ENCODE measurements at regions of chr7 and their contacts with region 1.

Region 1: DNA sequence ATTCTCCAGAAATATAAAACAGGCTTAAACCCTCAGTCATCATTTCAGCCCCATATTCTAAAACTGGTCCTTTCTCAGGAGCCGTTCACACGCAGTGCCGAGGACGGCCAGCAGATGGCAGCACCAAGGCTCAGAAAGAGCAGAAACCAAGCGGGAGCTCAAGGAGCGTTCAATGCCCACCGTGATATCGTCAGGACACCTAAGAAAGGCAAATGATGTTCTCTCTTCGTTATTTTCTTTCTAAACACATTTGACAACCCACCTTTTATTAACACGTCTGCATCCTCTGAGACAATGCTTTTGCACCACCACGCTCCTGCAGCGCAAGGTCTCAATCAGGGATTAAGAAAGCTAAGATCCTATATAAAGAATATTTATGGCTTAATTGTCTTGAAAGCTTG is 45.7 kb upstream of the RBM33 start:
- DNase-seq: peak; percentile 58 to 89 (median 80)
- H3K4me3 ChIP-seq: no peak overlapping the region
- H3K27ac ChIP-seq: no peak overlapping the region
- H3K4me1 ChIP-seq: no peaks in the 10 kb centered on the region
- H3K27me3 ChIP-seq: no peaks in the 10 kb centered on the region
- CTCF ChIP-seq: peak; percentile 74 to 82 (median 80)
- EP300 ChIP-seq: no peak
- POLR2A ChIP-seq: no peak

Region 2: GRCh38 chr7:155738652-155739537 is 140.1 kb after region 1 on chr7:
- intact Hi-C with region 1: loop called in 3 of 4 experiments (anchors 5 to 10 kb)
- DNase-seq: peak; percentile 47 to 79 (median 67)
- H3K4me3 ChIP-seq: no peak overlapping the region
- H3K27ac ChIP-seq: no peak overlapping the region
- H3K4me1 ChIP-seq: no peaks in the 10 kb centered on the region
- H3K27me3 ChIP-seq: no peaks in the 10 kb centered on the region
- CTCF ChIP-seq: peak in 1 of 3 donors; percentile 31
- EP300 ChIP-seq: no peak
- POLR2A ChIP-seq: no peak

Region 3: DNA sequence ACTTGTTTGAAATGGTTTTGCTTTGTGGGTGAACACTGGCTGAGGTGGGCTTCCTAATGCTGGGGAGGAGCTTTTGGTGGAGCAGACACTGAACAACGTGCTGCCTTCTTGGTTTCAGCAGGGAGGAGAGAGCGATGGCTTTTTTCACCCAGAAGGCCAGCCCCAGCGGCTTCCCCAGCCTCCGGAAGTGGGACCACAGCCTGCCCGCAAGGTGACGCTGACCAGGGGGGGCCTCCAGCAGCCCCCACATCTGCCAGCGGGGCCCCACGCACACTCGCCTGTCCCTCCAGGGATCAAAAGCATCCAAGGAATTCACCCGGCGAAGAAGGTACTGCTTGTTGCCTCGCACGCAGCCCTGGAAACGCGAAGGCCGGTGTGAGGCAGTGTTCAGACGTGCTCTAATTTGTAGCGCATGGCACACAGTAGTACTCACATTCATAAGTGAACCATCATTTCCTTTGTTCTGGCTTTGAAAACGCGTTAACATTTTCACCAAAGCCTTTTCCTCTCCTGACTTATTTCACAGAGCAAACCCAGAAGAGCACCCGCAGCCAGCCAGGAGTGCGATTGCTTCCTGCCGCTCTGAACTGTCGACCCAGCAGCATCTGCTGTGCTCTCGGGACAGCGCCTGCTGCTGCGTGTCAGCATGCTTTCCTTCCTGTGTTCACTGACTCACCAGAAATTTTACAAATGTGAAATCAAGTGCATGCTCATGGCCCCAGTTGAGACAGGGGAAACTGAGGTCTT is 165.1 kb after region 1 on chr7:
- intact Hi-C with region 1: loop called (anchors 5 to 10 kb)
- DNase-seq: no peak
- H3K4me3 ChIP-seq: no peak overlapping the region
- H3K27ac ChIP-seq: no peak overlapping the region
- H3K4me1 ChIP-seq: no peaks in the 10 kb centered on the region
- H3K27me3 ChIP-seq: no peaks in the 10 kb centered on the region
- CTCF ChIP-seq: no peak
- EP300 ChIP-seq: no peak
- POLR2A ChIP-seq: no peak

Region 4: GRCh38 chr7:155769701-155770100 is 170.9 kb after region 1 on chr7:
- intact Hi-C with region 1: loop called (anchors 5 to 10 kb)
- DNase-seq: no peak
- H3K4me3 ChIP-seq: no peak overlapping the region
- H3K27ac ChIP-seq: no peak overlapping the region
- H3K4me1 ChIP-seq: no peaks in the 10 kb centered on the region
- H3K27me3 ChIP-seq: no peaks in the 10 kb centered on the region
- CTCF ChIP-seq: no peak
- EP300 ChIP-seq: no peak
- POLR2A ChIP-seq: no peak

Region 5: GRCh38 chr7:156612930-156613329 is 1014.1 kb after region 1 on chr7:
- intact Hi-C with region 1: no loop called
- DNase-seq: no peak
- H3K4me3 ChIP-seq: no peak overlapping the region
- H3K27ac ChIP-seq: no peak overlapping the region
- H3K4me1 ChIP-seq: no peaks in the 10 kb centered on the region
- H3K27me3 ChIP-seq: no peaks in the 10 kb centered on the region
- CTCF ChIP-seq: no peak
- EP300 ChIP-seq: no peak
- POLR2A ChIP-seq: no peak